ENCODE measurements at regions of chr4 and their contacts with region 1.

Region 1: DNA sequence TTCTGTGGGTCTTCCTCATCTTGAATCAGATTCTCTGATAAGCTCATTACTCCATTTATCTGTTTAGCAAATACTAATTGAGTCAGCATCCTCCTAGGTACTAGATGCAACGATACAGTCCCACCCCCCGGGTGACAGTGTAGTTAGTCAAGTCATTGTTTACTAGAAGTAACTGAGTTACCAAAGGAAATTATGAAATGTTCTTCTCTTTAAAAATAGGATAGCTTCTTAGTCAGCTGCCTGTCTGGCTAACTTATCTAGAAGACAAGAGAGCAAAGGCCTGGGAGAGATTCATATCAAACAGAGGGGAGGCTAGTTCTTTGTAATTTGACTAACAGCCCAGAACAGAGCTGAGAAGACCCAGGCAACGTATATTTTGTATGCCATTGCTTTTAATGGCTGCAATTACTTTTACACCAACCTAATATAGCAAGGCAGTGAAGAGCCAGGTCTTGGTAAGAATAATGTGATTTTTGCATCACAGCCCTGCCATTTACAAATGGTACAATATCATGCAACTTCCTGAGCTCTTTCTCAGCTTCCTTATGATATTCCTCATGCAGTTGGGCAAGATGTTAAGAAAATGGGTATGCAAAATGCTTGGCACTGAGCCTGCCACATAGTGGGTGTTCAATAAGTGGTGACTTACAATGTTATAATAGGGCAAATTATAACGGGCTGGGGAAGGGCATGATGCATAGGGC is 149.9 kb downstream of the CHIC2 start:
- DNase-seq: peak; percentile 21 to 73
- ATAC-seq: peak; percentile 84 to 92
- H3K4me3 ChIP-seq: no peak overlapping the region
- H3K27ac ChIP-seq: peak overlapping the region; percentile 60 to 61; a peak in 5 of 6 replicates
- H3K4me1 ChIP-seq: peaks cover 19% of the 10 kb centered on the region
- CTCF ChIP-seq: no peak
- EP300 ChIP-seq: peak; percentile 31; a peak in 2 of 5 replicates
- POLR2A ChIP-seq: no peak
- RAD21 ChIP-seq: no peak

Region 2: DNA sequence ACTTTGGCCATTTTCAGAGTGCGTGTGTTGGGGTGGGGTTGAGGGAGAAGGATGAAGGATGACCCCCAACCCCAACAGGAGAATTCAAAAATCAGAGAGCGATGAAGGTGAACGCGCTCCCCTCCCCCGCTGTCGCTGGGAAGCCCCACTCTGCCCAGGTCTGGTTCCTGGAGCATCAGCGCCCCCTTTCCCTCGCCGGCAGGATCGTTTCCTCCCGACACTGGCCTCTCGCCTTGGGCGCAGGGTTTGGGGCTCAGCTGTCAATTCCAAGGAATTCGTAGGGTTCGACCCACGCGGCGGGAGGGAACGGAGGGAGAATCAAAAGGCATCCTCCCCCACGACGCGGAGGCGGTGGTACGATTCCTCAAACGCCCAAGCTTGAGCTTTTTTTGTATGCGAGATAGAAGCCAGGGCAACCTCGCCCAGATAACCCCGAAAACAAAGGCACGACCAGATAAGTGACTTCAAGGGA is 313.6 kb after region 1 on chr4:
- CTCF ChIA-PET with region 1: interaction called, 52 read pairs
- POLR2A ChIA-PET with region 1: no interaction called
- DNase-seq: peak; percentile 55 to 60
- ATAC-seq: peak; percentile 72 to 81
- H3K4me3 ChIP-seq: peak overlapping the region; percentile 47
- H3K27ac ChIP-seq: peak overlapping the region; percentile 42 to 76; a peak in 5 of 6 replicates
- H3K4me1 ChIP-seq: no peaks in the 10 kb centered on the region
- CTCF ChIP-seq: peak; percentile 70
- EP300 ChIP-seq: no peak
- POLR2A ChIP-seq: no peak
- RAD21 ChIP-seq: peak; percentile 86